ENCODE measurements at regions of chr17 and their contacts with region 1.

Region 1: GRCh38 chr17:76182016-76182764 is 41.1 kb upstream of the FOXJ1 start:
- DNase-seq: peak; percentile 67 to 85
- H3K4me3 ChIP-seq: no peak overlapping the region
- H3K27ac ChIP-seq: no peak overlapping the region
- H3K4me1 ChIP-seq: 0 out of 2 replicates have a peak, but pooled peaks cover 5% of the 10 kb centered on the region
- H3K27me3 ChIP-seq: no peaks in the 10 kb centered on the region
- CTCF ChIP-seq: peak; percentile 83

Region 2: DNA sequence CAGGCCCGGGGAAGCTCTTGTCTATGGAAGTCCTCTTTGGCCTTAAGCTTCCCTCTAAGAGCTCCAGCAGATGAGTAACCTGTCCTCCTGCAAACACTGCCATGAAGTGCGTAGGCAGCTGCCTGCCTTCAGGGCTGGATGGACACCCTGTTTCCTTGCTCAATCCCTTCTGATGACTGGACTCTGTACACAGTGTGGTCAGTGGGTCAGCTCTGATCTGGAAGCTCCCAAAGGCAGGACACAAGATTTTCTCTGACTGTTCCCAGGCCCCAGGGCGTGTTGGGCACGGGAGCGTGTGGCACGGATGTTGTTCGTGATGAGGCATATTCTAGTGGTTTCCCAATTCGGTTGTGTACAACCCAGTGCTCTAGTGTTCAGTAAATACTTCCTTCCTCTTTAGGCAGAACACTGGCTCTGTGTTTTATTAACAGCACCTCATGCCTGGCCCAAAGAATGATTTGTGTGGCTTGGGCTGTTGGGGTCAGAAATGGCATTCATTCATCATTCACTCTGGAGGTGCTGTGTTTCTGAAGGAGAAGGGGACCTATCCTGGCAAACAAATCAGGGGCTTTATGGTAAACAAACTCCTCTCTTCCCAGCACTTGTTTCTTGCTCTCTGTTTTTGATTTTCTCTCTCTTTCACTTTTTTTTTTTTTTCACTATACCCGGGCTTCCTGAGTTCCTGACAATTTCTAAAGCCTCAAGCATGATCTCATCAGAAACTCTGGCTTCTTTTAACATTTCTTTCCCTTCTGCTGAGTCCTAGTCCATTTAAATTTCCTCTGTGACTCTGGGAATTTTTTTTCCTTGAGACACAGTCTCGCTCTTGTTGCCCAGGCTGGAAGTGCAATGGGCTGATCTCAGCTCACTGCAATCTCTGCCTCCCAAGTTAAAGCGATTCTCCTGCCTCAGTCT is 70.1 kb after region 1 on chr17:
- CTCF ChIA-PET with region 1: interaction called, 3 read pairs
- POLR2A ChIA-PET with region 1: interaction called, 15 read pairs
- intact Hi-C with region 1: no loop called
- DNase-seq: peak; percentile 84 to 99
- H3K4me3 ChIP-seq: peak overlapping the region; percentile 35; the same call in 1 of the 2 replicates
- H3K27ac ChIP-seq: peak overlapping the region; percentile 98
- H3K4me1 ChIP-seq: peaks cover 37% of the 10 kb centered on the region
- H3K27me3 ChIP-seq: no peaks in the 10 kb centered on the region
- CTCF ChIP-seq: no peak

Measured in PC-9 (cell line).